PC-3 (cell line): ENCODE measurements at regions of chr3 and their contacts with region 1.

Region 1: DNA sequence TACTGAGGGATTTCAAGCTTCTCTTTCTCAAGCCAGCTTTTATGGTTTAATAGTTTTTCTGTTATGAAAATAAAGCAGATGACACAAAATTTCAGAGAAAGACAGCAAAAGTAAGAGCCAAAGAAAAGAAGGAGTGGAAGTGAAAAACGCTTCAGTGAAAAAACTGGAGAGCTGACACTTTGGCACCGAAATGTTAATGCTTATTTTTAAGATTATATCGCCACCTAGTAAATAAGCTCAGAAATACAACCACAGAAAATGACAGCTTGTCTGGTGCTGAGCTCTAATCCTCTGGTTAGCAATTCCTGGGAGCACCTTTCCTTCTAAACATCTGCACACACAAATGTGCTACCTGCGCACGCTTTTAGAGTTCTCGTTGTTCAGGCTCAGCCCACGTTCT is 101.6 kb downstream of the ZPLD1 start:
- DNase-seq: peak; percentile 84
- ATAC-seq: peak; percentile 82
- H3K4me3 ChIP-seq: no peak overlapping the region
- H3K27ac ChIP-seq: no peak overlapping the region
- H3K4me1 ChIP-seq: peaks cover 19% of the 10 kb centered on the region
- H3K27me3 ChIP-seq: no peaks in the 10 kb centered on the region
- CTCF ChIP-seq: peak; percentile 76

Region 2: DNA sequence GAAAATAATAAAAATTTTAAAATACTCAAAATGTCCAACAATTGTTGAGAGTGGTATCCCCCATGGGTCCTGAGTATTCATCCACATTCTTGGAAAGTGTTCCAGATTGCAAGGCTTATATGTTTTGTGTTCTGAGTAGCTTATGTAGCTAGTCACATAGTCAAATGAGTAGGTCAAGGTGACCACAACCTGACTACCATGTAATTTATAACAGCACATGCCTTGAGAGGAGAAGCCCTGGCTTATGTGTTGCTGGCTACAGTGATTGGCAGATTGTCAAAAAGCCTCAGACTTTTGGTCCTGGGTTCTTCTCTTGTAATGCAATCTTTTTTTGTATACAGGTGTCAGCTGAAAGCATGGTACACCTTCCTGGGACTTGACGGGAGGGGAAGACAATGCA is 212.0 kb before region 1 on chr3:
- CTCF ChIA-PET with region 1: no interaction called
- POLR2A ChIA-PET with region 1: no interaction called
- intact Hi-C with region 1: loop called (anchors 5 kb)
- DNase-seq: no peak
- ATAC-seq: no peak
- H3K4me3 ChIP-seq: no peak overlapping the region
- H3K27ac ChIP-seq: no peak overlapping the region
- H3K4me1 ChIP-seq: no peaks in the 10 kb centered on the region
- H3K27me3 ChIP-seq: no peaks in the 10 kb centered on the region
- CTCF ChIP-seq: no peak

Region 3: GRCh38 chr3:102466001-102466400 is 70.5 kb before region 1 on chr3:
- CTCF ChIA-PET with region 1: interaction called, 5 read pairs
- POLR2A ChIA-PET with region 1: no interaction called
- intact Hi-C with region 1: loop called (anchors 1 kb)
- DNase-seq: peak; percentile 51
- ATAC-seq: peak; percentile 90
- H3K4me3 ChIP-seq: no peak overlapping the region
- H3K27ac ChIP-seq: no peak overlapping the region
- H3K4me1 ChIP-seq: peaks cover 6% of the 10 kb centered on the region
- H3K27me3 ChIP-seq: no peaks in the 10 kb centered on the region
- CTCF ChIP-seq: peak; percentile 66

Region 4: DNA sequence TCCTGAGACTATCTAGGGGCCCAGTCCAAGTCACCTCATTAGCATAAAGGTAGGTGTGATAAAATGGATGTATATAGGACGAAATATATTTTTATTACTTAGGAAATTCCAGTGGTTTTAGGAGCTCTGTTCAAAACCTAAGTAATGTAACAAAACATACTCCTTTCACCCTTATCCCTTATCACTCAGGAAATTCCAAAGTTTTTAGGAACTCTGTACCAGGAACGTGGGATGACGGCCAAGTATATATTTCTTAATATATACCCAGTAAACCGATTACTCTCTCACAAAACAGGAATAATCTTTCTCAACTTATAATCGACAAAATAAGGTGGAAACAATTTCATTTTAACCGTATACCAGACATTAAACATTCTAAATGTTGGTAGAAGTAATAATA is 94.1 kb after region 1 on chr3:
- CTCF ChIA-PET with region 1: no interaction called
- POLR2A ChIA-PET with region 1: no interaction called
- intact Hi-C with region 1: no loop called
- DNase-seq: no peak
- ATAC-seq: no peak
- H3K4me3 ChIP-seq: no peak overlapping the region
- H3K27ac ChIP-seq: no peak overlapping the region
- H3K4me1 ChIP-seq: no peaks in the 10 kb centered on the region
- H3K27me3 ChIP-seq: peaks cover 3% of the 10 kb centered on the region; the same call in 1 of the 2 replicates
- CTCF ChIP-seq: no peak